Breast epithelium (tissue), 4 donors: ENCODE measurements at regions of chr3 and their contacts with region 1.

Region 1: GRCh38 chr3:4350789-4351163 is 47.6 kb downstream of the SETMAR start:
- DNase-seq: no peak
- H3K4me3 ChIP-seq: peak overlapping the region; percentile 32 to 39 (median 38)
- H3K27ac ChIP-seq: peak overlapping the region; percentile 4 to 69
- H3K4me1 ChIP-seq: no peaks in the 10 kb centered on the region
- H3K27me3 ChIP-seq: no peaks in the 10 kb centered on the region
- CTCF ChIP-seq: peak; percentile 63 to 85 (median 74)
- POLR2A ChIP-seq: no peak

Region 2: DNA sequence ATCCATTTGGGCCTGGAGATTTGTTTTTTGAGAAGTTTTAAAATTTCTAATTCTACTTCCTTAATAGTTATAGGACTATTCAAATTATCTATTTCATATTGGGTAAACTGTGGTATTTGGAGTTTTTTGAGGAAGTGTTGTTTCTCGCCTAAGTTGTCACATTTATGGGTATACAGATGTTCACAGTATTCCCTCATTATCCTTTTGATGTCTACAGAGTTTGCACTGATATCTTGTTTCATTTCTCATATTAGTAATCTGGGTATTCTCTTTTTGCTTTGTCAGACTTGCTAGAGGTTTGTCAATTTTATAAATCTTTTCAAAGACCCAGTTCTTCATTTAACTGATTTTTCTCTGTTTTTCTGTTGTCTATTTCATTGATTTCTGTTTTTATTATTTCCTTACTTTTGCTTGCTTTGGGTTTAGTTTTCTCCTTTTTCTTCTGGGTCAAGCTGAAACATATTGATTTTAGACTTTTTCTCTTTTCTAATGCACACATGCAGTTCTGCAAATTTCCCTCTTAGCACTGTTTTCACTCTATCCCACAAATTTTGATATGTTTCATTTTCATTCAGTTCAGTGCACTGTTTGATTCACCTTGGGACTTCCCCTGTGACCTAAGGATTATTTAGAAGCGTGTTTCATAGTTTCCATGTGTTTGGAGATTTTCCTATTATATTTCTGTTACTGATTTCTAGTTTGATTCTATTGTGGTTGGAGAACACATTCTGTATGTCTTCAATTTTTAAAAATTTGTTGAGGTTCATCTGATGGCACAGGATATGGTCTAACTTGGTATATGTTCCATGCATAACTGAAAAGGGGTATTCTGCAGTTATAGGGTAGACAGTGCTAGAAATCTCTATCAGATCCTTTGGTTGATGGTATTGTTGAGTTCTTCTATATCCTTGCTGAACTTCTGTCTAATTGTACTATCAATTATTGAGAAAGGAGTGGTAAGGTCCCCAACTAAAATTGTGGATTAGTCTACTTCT is 36.7 kb after region 1 on chr3:
- intact Hi-C with region 1: no loop called
- DNase-seq: no peak
- H3K4me3 ChIP-seq: no peak overlapping the region
- H3K27ac ChIP-seq: no peak overlapping the region
- H3K4me1 ChIP-seq: no peaks in the 10 kb centered on the region
- H3K27me3 ChIP-seq: no peaks in the 10 kb centered on the region
- CTCF ChIP-seq: no peak
- POLR2A ChIP-seq: no peak

Region 3: DNA sequence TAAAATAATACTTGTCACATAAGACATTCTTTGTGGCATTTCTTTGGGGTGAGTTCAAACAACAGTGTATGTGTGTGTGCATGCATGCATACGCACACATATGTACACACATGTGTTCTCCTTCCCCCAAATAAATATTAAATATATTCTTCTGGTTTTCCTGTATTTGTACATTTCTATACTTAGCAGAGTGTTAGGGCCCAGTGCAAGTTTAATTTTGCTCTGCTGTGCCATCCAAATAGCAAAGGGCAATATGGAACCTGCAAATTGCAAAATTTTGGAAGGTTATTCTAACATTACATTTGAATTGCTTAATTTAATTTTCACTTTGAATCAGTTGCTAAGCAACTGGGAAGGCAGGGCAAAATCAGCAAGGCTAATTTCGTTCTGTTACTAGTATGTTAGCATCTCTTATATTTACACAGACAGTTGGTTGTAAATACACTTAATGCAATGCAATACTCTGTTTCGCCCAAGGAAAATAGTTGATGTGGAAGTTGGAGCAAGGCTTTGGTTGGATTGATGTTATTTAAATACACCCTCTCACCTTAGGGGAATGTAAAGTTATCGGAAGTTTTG is 272.7 kb after region 1 on chr3:
- intact Hi-C with region 1: loop called (anchors 5 kb)
- DNase-seq: no peak
- H3K4me3 ChIP-seq: no peak overlapping the region
- H3K27ac ChIP-seq: no peak overlapping the region
- H3K4me1 ChIP-seq: no peaks in the 10 kb centered on the region
- H3K27me3 ChIP-seq: no peaks in the 10 kb centered on the region
- CTCF ChIP-seq: no peak
- POLR2A ChIP-seq: no peak

Region 4: DNA sequence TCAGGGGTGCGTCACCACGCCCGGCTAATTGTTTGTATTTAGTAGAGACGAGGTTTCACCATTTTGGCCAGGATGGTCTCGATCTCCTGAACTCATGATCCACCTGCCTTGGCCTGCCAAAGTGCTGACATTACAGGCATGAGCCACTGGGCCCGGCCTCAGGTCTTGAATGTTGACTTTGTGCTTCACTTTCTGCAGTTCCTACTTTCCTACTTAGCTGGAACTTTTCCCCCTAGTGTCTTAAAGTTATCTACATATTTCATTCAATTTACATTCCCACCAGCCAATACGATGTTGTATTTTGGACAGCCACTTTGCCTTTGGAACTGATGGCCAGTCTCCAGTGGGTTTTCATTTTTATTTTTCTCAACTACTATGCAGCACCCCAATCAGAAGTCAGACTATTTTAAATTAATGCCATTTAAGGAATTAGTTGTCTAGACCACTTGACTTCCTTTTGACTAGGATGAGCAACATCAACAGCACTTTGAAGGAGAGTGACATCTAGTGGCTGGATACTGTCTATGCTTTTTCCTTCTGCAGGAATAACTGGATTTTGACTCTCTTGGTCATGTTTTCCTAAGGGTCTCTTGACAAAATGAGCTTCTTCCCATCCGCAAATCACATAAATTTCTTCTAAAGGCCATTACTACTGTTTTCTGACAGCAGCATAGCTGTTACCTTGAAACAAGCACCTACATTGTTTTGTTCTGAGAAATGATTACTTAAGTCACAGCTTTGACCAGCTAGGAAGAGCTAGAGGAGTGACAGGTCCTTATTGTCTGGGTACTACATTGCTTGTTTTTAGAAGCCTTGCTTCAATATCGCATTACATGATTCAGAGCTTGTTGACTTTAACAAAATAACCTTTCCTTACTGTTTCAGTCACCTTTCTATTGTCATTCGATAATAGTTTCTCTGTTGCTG is 282.6 kb after region 1 on chr3:
- intact Hi-C with region 1: loop called (anchors 5 kb)
- DNase-seq: no peak
- H3K4me3 ChIP-seq: no peak overlapping the region
- H3K27ac ChIP-seq: no peak overlapping the region
- H3K4me1 ChIP-seq: no peaks in the 10 kb centered on the region
- H3K27me3 ChIP-seq: no peaks in the 10 kb centered on the region
- CTCF ChIP-seq: peak; percentile 66 to 82 (median 78)
- POLR2A ChIP-seq: no peak